Activated CD8-positive, alpha-beta T cell treated with anti-CD3 and anti-CD28 coated beads, Interleukin-2, amount 10 ng/mL, durations not matched to agents 7 days and 5 days (primary cell): ENCODE measurements at regions of chr9 and their contacts with region 1.

Region 1: GRCh38 chr9:126523611-126524111 is 90.1 kb upstream of the LMX1B start:
- DNase-seq: peak; percentile 57
- ATAC-seq: peak; percentile 74
- H3K4me3 Mint-ChIP-seq: peak overlapping the region; percentile 54
- H3K27ac Mint-ChIP-seq: peak overlapping the region; percentile 81
- H3K4me1 Mint-ChIP-seq: peaks cover 22% of the 10 kb centered on the region
- H3K27me3 Mint-ChIP-seq: peaks cover 27% of the 10 kb centered on the region

Region 2: DNA sequence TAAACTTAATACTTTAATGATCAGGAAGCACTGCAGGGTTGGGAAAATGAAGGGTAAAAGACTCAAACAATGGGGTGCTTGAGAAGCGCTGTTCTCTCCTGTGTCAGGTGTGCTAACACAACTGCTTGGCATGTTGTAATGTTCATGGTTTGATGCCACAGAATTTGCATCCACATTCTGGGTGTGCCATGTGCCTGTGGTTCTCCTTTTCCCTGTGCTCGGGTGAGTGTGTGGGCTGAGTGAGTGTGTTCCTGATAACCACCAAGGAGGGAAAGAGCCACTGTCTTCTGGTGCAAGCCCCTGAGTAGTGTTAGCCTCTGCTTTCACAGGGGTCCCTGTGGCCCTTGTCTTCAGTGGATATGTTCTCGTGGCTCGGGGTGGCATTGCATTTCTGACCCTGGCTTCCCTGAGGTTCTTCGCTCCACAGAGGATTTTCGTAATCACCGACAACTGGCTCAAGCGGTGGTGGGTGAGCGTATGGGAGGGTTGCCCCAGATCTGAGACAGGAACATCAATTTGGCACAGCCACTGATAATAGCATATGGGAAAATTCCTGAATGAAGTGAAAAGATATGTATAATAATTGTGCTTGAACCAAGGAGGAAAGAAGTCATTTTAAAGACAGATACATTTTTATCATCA is 95.0 kb before region 1 on chr9:
- CTCF ChIA-PET with region 1: no interaction called
- POLR2A ChIA-PET with region 1: no interaction called
- DNase-seq: no peak
- ATAC-seq: no peak
- H3K4me3 Mint-ChIP-seq: no peak overlapping the region
- H3K27ac Mint-ChIP-seq: no peak overlapping the region
- H3K4me1 Mint-ChIP-seq: peaks cover 13% of the 10 kb centered on the region
- H3K27me3 Mint-ChIP-seq: no peaks in the 10 kb centered on the region

Region 3: GRCh38 chr9:126534431-126535186 is 10.9 kb after region 1 on chr9:
- CTCF ChIA-PET with region 1: no interaction called
- POLR2A ChIA-PET with region 1: no interaction called
- DNase-seq: no peak
- ATAC-seq: no peak
- H3K4me3 Mint-ChIP-seq: no peak overlapping the region
- H3K27ac Mint-ChIP-seq: no peak overlapping the region
- H3K4me1 Mint-ChIP-seq: no peaks in the 10 kb centered on the region
- H3K27me3 Mint-ChIP-seq: peaks cover 9% of the 10 kb centered on the region

Region 4: GRCh38 chr9:126558051-126558665 is 34.5 kb after region 1 on chr9:
- CTCF ChIA-PET with region 1: interaction called, 42 read pairs
- POLR2A ChIA-PET with region 1: no interaction called
- DNase-seq: peak; percentile 81
- ATAC-seq: peak; percentile 90
- H3K4me3 Mint-ChIP-seq: no peak overlapping the region
- H3K27ac Mint-ChIP-seq: no peak overlapping the region
- H3K4me1 Mint-ChIP-seq: no peaks in the 10 kb centered on the region
- H3K27me3 Mint-ChIP-seq: peaks cover 25% of the 10 kb centered on the region